ENCODE measurements at regions of chr15 and their contacts with region 1.

Region 1: DNA sequence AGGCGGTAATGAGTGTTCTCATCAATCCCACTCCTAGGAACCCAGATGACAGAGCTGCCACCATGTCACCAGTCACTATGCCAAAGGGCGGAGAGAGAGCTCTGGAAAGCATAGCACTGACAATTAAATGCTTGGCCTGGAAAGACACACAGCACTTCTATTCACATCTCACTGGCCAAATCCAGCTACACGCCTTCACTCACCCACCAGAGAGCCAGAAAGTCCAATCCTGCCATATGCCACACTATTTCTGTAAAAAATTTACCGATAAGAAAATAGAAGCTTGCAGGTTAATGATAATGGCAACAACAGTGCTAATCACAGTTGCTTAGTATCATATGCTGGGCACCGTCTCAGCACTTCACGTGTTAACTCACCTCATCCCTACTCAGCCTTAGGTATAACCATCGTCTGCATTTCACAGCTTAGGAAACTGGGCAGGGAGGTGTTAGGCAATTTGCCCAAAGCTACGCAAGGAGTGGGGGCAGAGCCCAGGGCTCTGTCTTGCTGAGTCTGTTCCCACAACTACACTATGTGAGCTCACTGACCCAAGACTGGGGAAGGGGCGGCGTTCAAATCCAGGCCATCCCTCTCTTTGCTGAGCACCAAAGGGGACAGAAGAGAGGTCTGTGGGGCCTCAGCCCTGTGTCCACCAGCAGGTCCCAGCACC is 16.5 kb downstream of the KLHL25 start:
- DNase-seq: peak in 1 of 2 donors; percentile 55
- ATAC-seq: peak; percentile 47 to 78
- H3K4me3 ChIP-seq: no peak overlapping the region
- H3K27ac ChIP-seq: peak overlapping the region in 1 of 4 donors; percentile 47
- H3K4me1 ChIP-seq: peaks cover 58 to 68% of the 10 kb centered on the region in 2 donors
- H3K27me3 ChIP-seq: no peaks in the 10 kb centered on the region
- CTCF ChIP-seq: no peak
- POLR2A ChIP-seq: no peak

Region 2: GRCh38 chr15:85737061-85737460 is 41.2 kb before region 1 on chr15:
- in situ Hi-C with region 1: no loop called
- intact Hi-C with region 1: loop called (anchors 5 kb)
- DNase-seq: no peak
- ATAC-seq: no peak
- H3K4me3 ChIP-seq: no peak overlapping the region
- H3K27ac ChIP-seq: peak overlapping the region in 2 of 4 donors; percentile 2 to 27
- H3K4me1 ChIP-seq: peaks cover 9 to 10% of the 10 kb centered on the region in 2 donors
- H3K27me3 ChIP-seq: no peaks in the 10 kb centered on the region
- CTCF ChIP-seq: no peak
- POLR2A ChIP-seq: no peak

Region 3: DNA sequence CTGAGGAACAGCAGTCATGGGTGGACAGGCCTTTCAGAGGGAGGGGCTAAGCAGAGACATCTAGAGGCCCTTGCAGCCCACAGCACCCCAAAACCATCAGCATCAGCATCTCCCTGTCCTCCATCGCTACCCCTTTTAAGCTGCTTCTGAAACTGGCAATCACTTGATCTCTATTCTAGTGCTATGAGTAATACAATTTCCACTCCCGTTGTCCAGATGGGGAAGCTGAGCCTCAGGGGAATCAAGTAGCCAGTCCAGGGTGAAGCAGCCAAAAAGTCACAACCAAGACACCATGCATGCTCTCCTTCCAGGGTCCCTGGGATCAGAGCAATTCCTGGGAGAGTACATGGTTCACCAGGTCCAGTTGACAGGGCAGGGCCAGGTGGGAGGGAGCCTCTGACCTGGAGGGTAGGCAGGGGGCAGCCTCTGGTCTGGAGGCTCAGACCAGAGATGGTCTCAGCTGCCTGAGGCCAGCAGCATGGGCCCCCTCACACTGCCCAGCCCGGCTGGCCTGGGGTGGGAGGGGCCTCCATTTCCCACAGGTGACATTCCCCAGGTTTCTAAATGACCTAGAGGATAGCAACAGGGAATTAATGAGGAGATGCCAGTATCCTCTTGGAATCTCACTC is 13.5 kb before region 1 on chr15:
- in situ Hi-C with region 1: no loop called
- intact Hi-C with region 1: loop called (anchors 2 kb)
- DNase-seq: peak; percentile 48 to 70
- ATAC-seq: peak; percentile 85 to 86
- H3K4me3 ChIP-seq: no peak overlapping the region
- H3K27ac ChIP-seq: peak overlapping the region; percentile 69 to 77 (median 73)
- H3K4me1 ChIP-seq: peaks cover 43 to 47% of the 10 kb centered on the region in 2 donors
- H3K27me3 ChIP-seq: no peaks in the 10 kb centered on the region
- CTCF ChIP-seq: no peak
- POLR2A ChIP-seq: no peak

Measured in gastrocnemius medialis (tissue), 4 donors.